GM12878 (cell line): ENCODE measurements at regions of chr11 and their contacts with region 1.

Region 1: DNA sequence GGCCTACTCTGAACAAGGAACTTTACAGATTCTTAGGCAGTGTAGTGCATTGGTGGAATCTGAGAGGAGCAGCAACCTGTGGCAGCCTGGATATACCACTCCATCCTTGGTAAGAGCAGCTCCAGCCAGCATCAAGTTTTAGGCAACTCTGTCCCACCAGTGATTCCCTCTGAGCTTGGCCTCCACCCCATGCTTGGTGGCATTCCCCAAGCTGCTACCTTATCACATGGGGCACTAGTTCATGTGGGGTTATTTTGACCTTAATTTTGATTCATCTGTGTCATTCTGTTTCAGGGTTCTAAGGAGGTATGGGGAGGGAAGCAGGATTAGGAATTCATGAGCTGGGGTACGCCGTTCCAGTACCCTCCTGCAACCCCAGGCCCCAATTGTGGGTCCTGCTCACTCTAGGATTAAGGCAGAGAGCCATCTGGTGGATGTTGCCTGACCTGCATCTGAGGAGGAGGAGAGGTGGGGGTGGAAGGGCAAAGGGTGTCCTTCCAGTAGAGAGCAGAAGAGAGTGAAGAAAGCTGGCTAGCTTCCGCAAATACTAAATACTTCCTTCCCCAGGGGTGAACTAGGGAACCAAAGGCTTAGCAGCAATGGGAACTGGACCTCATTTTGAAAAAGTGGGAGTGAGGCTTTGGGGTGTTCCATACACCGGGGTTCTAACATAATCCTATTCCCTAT is 10.5 kb downstream of the LRRC51 start:
- DNase-seq: no peak
- ATAC-seq: peak; percentile 99
- H3K4me3 ChIP-seq: no peak overlapping the region
- H3K27ac ChIP-seq: no peak overlapping the region
- H3K4me1 ChIP-seq: no peaks in the 10 kb centered on the region
- H3K27me3 ChIP-seq: no peaks in the 10 kb centered on the region
- CTCF ChIP-seq: peak; percentile 84 to 91 (median 89)
- EP300 ChIP-seq: no peak
- POLR2A ChIP-seq: peak; percentile 33
- RAD21 ChIP-seq: peak; percentile 93

Region 2: GRCh38 chr11:71962428-71963038 is 128.6 kb before region 1 on chr11:
- CTCF ChIA-PET with region 1: interaction called, 10 read pairs
- POLR2A ChIA-PET with region 1: no interaction called
- RAD21 ChIA-PET with region 1: no interaction called
- SMC1A ChIA-PET with region 1: no interaction called
- in situ Hi-C with region 1: no loop called
- intact Hi-C with region 1: no loop called
- DNase-seq: peak; percentile 53
- ATAC-seq: peak; percentile 96
- H3K4me3 ChIP-seq: peak overlapping the region; percentile 46; the same call in 1 of the 2 replicates
- H3K27ac ChIP-seq: peak overlapping the region; percentile 65
- H3K4me1 ChIP-seq: peaks cover 11% of the 10 kb centered on the region
- H3K27me3 ChIP-seq: no peaks in the 10 kb centered on the region
- CTCF ChIP-seq: no peak
- EP300 ChIP-seq: peak in 1 of 2 experiments; percentile 83; a peak in 1 of 4 replicates
- POLR2A ChIP-seq: no peak
- RAD21 ChIP-seq: no peak

Region 3: GRCh38 chr11:72030472-72031045 is 60.6 kb before region 1 on chr11:
- CTCF ChIA-PET with region 1: interaction called, 416 read pairs
- POLR2A ChIA-PET with region 1: interaction called, 14 read pairs
- RAD21 ChIA-PET with region 1: interaction called, 112 read pairs
- SMC1A ChIA-PET with region 1: interaction called, 245 read pairs
- in situ Hi-C with region 1: no loop called
- intact Hi-C with region 1: loop called (anchors 1 kb)
- DNase-seq: no peak
- ATAC-seq: no peak
- H3K4me3 ChIP-seq: no peak overlapping the region
- H3K27ac ChIP-seq: no peak overlapping the region
- H3K4me1 ChIP-seq: no peaks in the 10 kb centered on the region
- H3K27me3 ChIP-seq: no peaks in the 10 kb centered on the region
- CTCF ChIP-seq: no peak
- EP300 ChIP-seq: no peak
- POLR2A ChIP-seq: no peak
- RAD21 ChIP-seq: no peak

Region 4: DNA sequence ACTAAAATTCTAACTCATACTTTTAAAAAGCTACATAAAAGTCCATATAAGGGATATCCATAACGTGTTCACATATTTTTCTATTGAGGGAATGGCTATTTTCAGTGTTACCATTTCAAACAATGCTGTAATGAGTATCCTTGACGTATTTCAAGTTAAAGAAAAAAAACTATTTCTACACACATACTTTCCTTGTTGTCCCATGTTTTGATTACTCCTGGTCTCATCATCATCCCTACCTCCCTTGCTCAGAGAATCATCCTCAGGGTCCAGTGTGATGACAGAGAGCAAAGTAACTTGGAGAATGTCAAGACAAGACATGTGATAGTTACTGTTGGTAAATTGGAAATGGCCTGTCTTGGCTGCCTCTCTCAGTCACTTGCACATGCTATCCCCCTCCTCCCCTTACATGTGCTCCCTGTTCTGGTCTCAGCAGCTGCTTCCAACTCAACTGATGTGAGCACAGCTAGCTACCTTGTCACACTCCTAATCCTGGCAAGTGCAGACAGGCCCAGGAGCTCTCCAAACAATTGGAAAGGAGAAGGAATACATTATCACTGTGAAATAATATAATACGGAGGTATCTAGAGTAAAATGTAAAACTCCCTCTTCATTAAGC is 32.6 kb before region 1 on chr11:
- CTCF ChIA-PET with region 1: interaction called, 24 read pairs
- POLR2A ChIA-PET with region 1: interaction called, 3 read pairs
- RAD21 ChIA-PET with region 1: no interaction called
- SMC1A ChIA-PET with region 1: interaction called, 8 read pairs
- in situ Hi-C with region 1: no loop called
- intact Hi-C with region 1: no loop called
- DNase-seq: no peak
- ATAC-seq: no peak
- H3K4me3 ChIP-seq: no peak overlapping the region
- H3K27ac ChIP-seq: no peak overlapping the region
- H3K4me1 ChIP-seq: no peaks in the 10 kb centered on the region
- H3K27me3 ChIP-seq: no peaks in the 10 kb centered on the region
- CTCF ChIP-seq: no peak
- EP300 ChIP-seq: no peak
- POLR2A ChIP-seq: no peak
- RAD21 ChIP-seq: no peak

Region 5: GRCh38 chr11:72075109-72075508 is 16.0 kb before region 1 on chr11:
- CTCF ChIA-PET with region 1: interaction called, 21 read pairs
- POLR2A ChIA-PET with region 1: interaction called, 4 read pairs
- RAD21 ChIA-PET with region 1: interaction called, 5 read pairs
- SMC1A ChIA-PET with region 1: interaction called, 6 read pairs
- in situ Hi-C with region 1: no loop called
- intact Hi-C with region 1: no loop called
- DNase-seq: no peak
- ATAC-seq: peak; percentile 28; the same call in 1 of the 3 replicates
- H3K4me3 ChIP-seq: no peak overlapping the region
- H3K27ac ChIP-seq: peak overlapping the region; percentile 48
- H3K4me1 ChIP-seq: peaks cover 15% of the 10 kb centered on the region
- H3K27me3 ChIP-seq: no peaks in the 10 kb centered on the region
- CTCF ChIP-seq: peak; percentile 32 to 59 (median 41)
- EP300 ChIP-seq: no peak
- POLR2A ChIP-seq: no peak
- RAD21 ChIP-seq: peak; percentile 34; the same call in 1 of the 2 replicates

Region 6: DNA sequence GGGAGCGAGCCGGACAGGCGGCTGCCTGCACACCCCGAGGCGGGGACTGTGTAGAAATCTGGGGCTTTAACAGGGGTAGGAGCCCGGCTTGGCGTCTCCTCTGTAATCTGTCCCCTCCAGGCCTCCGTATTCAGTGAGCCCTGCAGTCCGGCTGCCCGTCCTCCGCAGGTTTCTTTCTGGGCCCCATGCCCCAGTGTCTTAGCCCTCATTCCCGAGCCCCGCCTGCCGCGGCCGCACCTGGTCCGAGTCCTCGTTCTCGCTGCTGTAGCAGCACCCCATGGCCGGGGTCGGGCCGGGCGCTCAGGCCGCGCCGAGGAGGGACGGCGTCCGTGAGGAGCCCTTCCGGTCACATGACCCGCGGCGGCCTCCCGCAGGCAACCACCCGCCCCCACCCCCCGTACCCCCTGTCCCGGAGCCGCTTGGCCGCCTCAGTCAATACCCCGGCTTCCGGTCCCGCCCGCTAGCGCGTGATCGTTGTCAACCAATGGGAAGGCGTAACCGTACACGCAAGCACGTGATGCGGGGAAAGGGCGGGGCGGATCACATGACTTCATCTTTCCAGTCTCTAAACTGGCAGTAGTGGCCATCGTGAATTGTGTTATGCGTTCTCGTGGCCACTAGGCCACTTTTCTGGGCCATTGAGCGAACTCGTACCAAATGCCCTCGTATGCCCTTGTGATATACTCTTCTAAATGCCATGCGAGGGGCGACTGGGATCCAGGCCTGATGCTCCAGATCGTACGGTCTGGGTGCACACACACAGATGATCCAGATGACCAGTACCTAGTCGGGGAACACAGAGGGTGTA is 12.0 kb after region 1 on chr11 and contains the start of gene LAMTOR1:
- CTCF ChIA-PET with region 1: interaction called, 31 read pairs
- POLR2A ChIA-PET with region 1: interaction called, 6 read pairs
- RAD21 ChIA-PET with region 1: interaction called, 14 read pairs
- SMC1A ChIA-PET with region 1: interaction called, 32 read pairs
- in situ Hi-C with region 1: no loop called
- intact Hi-C with region 1: no loop called
- DNase-seq: peak; percentile 97
- ATAC-seq: peak; percentile 97
- H3K4me3 ChIP-seq: peak within 1 kb of the TSS; percentile 94
- H3K27ac ChIP-seq: peak within 1 kb of the TSS; percentile 90
- H3K4me1 ChIP-seq: peaks cover 21% of the 10 kb centered on the region
- H3K27me3 ChIP-seq: no peaks in the 10 kb centered on the region
- CTCF ChIP-seq: peak; percentile 20 to 48 (median 40); a peak in 5 of 6 replicates
- EP300 ChIP-seq: peak in 1 of 2 experiments; percentile 17; a peak in 1 of 4 replicates
- POLR2A ChIP-seq: peak; percentile 94
- RAD21 ChIP-seq: no peak
- polyA plus RNA-seq, gene LAMTOR1: 85.1 to 126 TPM